Psoas muscle (tissue), 8 donors: ENCODE measurements at regions of chr14 and their contacts with region 1.

Region 1: GRCh38 chr14:32469388-32470160 is 140.5 kb downstream of the AKAP6 start:
- DNase-seq: no peak
- ATAC-seq: peak in 1 of 4 donors; percentile 67
- H3K4me3 ChIP-seq: no peak overlapping the region
- H3K27ac ChIP-seq: peak overlapping the region; percentile 44
- H3K4me1 ChIP-seq: peaks cover 56% of the 10 kb centered on the region
- H3K27me3 ChIP-seq: no peaks in the 10 kb centered on the region
- CTCF ChIP-seq: peak; percentile 65

Region 2: DNA sequence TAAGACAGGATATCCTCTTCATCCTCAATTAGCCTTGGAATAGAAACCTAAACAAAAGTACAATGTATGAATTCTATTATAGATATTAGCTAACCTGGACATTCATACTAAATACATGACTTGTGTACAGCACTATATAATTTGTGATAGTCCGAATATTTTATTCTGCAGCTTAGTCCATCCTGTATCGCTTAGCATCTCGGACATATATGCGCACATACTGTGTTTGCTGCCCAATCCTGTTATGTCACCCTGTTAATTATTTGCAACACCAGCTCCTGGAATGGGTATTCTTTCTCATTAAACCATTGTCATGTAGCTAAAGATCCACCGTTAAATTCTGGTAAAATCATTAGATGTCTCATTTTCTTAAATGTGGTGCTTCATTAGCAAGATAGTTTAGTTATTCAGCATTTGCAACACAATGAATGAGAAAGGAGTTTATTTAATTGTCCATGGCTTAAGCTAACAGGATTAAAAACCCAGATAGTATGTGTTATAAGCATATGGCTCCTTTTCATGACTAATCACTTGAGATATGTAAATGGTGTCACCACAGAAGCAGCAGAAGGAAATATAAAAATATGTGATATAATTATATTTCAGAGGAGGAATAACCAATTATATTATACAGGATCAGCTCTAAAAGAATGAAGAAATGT is 548.5 kb before region 1 on chr14:
- intact Hi-C with region 1: loop called in 1 of 2 experiments (anchors 5 kb)
- DNase-seq: no peak
- ATAC-seq: no peak
- H3K4me3 ChIP-seq: no peak overlapping the region
- H3K27ac ChIP-seq: no peak overlapping the region
- H3K4me1 ChIP-seq: peaks cover 7% of the 10 kb centered on the region
- H3K27me3 ChIP-seq: no peaks in the 10 kb centered on the region
- CTCF ChIP-seq: no peak

Region 3: DNA sequence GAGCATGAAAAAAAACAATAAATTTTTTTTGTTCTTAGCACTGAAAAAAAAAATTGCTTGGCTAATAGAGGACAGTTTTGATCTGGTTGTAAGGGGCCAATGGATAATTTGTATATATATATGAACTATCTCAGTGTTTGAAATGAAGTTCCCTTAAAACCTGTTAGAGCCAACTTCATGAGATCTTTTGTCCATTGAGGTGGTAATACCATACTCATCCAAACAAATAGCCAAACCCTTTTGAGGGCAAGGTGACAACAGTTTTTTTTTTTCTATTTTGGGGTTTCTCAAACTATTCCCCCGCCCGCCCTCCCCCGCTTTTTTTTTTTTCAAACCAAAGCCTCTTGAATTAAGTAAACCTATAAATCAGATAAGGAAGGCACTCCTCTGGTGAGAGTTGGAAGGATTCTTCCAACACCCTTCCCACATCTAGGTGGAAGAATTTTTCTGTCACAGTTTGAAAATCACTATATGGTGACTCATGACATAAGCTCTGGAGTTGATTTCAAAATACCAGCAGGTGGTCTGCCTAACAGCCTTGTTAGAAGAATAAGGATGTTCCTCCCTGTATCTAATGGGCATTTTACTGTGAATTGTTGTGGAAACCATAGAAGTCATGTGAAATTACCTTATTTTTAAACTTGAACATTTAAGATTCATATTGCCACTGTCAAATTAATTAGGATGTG is 382.3 kb before region 1 on chr14:
- intact Hi-C with region 1: loop called in 1 of 2 experiments (anchors 5 kb)
- DNase-seq: no peak
- ATAC-seq: peak in 2 of 4 donors; percentile 65 to 69
- H3K4me3 ChIP-seq: no peak overlapping the region
- H3K27ac ChIP-seq: no peak overlapping the region
- H3K4me1 ChIP-seq: peaks cover 28% of the 10 kb centered on the region
- H3K27me3 ChIP-seq: no peaks in the 10 kb centered on the region
- CTCF ChIP-seq: no peak

Region 4: GRCh38 chr14:32252030-32252670 is 217.4 kb before region 1 on chr14:
- intact Hi-C with region 1: loop called (anchors 2 to 5 kb)
- DNase-seq: no peak
- ATAC-seq: peak; percentile 84 to 93 (median 90)
- H3K4me3 ChIP-seq: no peak overlapping the region
- H3K27ac ChIP-seq: peak overlapping the region; percentile 24
- H3K4me1 ChIP-seq: peaks cover 5% of the 10 kb centered on the region
- H3K27me3 ChIP-seq: no peaks in the 10 kb centered on the region
- CTCF ChIP-seq: peak; percentile 80

Region 5: GRCh38 chr14:32560209-32560857 is 90.8 kb after region 1 on chr14:
- intact Hi-C with region 1: loop called in 1 of 2 experiments (anchors 5 kb)
- DNase-seq: peak in 1 of 2 donors; percentile 18
- ATAC-seq: peak; percentile 68 to 87 (median 82)
- H3K4me3 ChIP-seq: no peak overlapping the region
- H3K27ac ChIP-seq: peak overlapping the region; percentile 24
- H3K4me1 ChIP-seq: peaks cover 50% of the 10 kb centered on the region
- H3K27me3 ChIP-seq: no peaks in the 10 kb centered on the region
- CTCF ChIP-seq: peak; percentile 80

Region 6: GRCh38 chr14:32571995-32572866 is 102.7 kb after region 1 on chr14:
- intact Hi-C with region 1: no loop called
- DNase-seq: no peak
- ATAC-seq: no peak
- H3K4me3 ChIP-seq: no peak overlapping the region
- H3K27ac ChIP-seq: no peak overlapping the region
- H3K4me1 ChIP-seq: peaks cover 6% of the 10 kb centered on the region
- H3K27me3 ChIP-seq: no peaks in the 10 kb centered on the region
- CTCF ChIP-seq: no peak